GM12878 (cell line): ENCODE measurements at regions of chr6 and their contacts with region 1.

Region 1: DNA sequence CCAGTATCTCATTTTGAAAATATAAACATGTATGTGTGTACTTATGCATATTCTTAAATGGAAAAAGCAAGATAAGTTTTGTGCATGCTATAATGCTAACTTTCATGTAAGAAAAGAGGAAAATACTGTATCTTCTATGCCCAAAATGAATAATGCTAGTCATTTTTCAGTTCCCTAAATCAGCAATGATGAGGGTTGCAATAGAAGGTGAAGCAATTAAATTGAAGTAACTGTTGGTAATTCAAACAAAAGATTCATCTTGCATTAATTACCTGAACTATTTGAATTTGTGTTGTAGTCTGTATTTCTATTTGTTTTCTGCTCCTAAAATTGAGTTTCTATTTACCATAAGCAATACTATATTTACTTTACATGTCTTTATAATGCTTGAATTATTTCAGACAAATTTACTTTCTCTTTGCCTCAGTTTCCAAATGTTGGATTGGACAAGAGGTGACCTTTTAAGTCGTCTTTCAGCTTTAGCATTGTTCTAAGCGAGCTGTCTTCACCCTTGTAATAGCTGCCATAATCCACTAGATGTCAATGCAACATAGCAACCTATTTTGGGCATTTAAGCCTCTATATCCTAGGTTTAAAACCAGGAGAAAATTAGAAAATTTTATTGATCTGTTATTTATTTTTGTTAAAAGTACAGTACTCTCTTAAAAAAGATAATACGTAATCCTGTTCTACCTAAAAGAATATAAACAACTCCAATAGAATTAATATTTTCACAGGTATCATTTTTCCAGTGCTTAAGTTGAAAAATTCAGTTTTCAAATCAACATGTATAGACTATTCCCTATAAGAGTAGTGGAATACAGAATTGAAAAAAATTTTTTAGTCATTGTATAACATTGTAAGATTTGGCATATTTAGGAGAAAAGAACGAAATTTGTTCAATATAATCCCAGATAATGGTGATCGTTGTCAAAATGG is 52.3 kb upstream of the IFNGR1 start:
- DNase-seq: no peak
- ATAC-seq: peak; percentile 92
- H3K4me3 ChIP-seq: no peak overlapping the region
- H3K27ac ChIP-seq: no peak overlapping the region
- H3K4me1 ChIP-seq: peaks cover 3% of the 10 kb centered on the region
- H3K27me3 ChIP-seq: no peaks in the 10 kb centered on the region
- CTCF ChIP-seq: peak; percentile 80 to 91 (median 85)
- EP300 ChIP-seq: no peak
- POLR2A ChIP-seq: no peak
- RAD21 ChIP-seq: peak; percentile 100

Region 2: GRCh38 chr6:137171824-137172705 is 99.4 kb before region 1 on chr6:
- CTCF ChIA-PET with region 1: interaction called, 17 read pairs
- POLR2A ChIA-PET with region 1: interaction called, 4 read pairs
- RAD21 ChIA-PET with region 1: interaction called, 23 read pairs
- SMC1A ChIA-PET with region 1: interaction called, 28 read pairs
- in situ Hi-C with region 1: no loop called
- intact Hi-C with region 1: no loop called
- DNase-seq: peak; percentile 68
- ATAC-seq: peak; percentile 86
- H3K4me3 ChIP-seq: 0 out of 2 replicates have a peak overlapping the region, but pooled peaks have one; percentile 1
- H3K27ac ChIP-seq: peak overlapping the region; percentile 84
- H3K4me1 ChIP-seq: peaks cover 51% of the 10 kb centered on the region
- H3K27me3 ChIP-seq: no peaks in the 10 kb centered on the region
- CTCF ChIP-seq: no peak
- EP300 ChIP-seq: peak; percentile 51 to 64; a peak in 1 of 4 replicates
- POLR2A ChIP-seq: 0 out of 2 replicates have a peak, but pooled peaks have one; percentile 31
- RAD21 ChIP-seq: peak; percentile 18; the same call in 1 of the 2 replicates

Region 3: GRCh38 chr6:137233911-137234863 is 37.3 kb before region 1 on chr6:
- CTCF ChIA-PET with region 1: interaction called, 7 read pairs
- POLR2A ChIA-PET with region 1: no interaction called
- RAD21 ChIA-PET with region 1: interaction called, 9 read pairs
- SMC1A ChIA-PET with region 1: interaction called, 27 read pairs
- in situ Hi-C with region 1: no loop called
- intact Hi-C with region 1: no loop called
- DNase-seq: no peak
- ATAC-seq: peak; percentile 79
- H3K4me3 ChIP-seq: peak overlapping the region; percentile 28; the same call in 1 of the 2 replicates
- H3K27ac ChIP-seq: peak overlapping the region; percentile 76
- H3K4me1 ChIP-seq: peaks cover 52% of the 10 kb centered on the region
- H3K27me3 ChIP-seq: no peaks in the 10 kb centered on the region
- CTCF ChIP-seq: no peak
- EP300 ChIP-seq: peak in 1 of 2 experiments; percentile 60; a peak in 1 of 4 replicates
- POLR2A ChIP-seq: no peak
- RAD21 ChIP-seq: no peak

Region 4: GRCh38 chr6:137313928-137314855 is 42.7 kb after region 1 on chr6:
- CTCF ChIA-PET with region 1: interaction called, 70 read pairs
- POLR2A ChIA-PET with region 1: interaction called, 5 read pairs
- RAD21 ChIA-PET with region 1: interaction called, 61 read pairs
- SMC1A ChIA-PET with region 1: interaction called, 56 read pairs
- in situ Hi-C with region 1: no loop called
- intact Hi-C with region 1: loop called (anchors 1 kb)
- DNase-seq: peak; percentile 43
- ATAC-seq: peak; percentile 97
- H3K4me3 ChIP-seq: no peak overlapping the region
- H3K27ac ChIP-seq: no peak overlapping the region
- H3K4me1 ChIP-seq: peaks cover 10% of the 10 kb centered on the region
- H3K27me3 ChIP-seq: no peaks in the 10 kb centered on the region
- CTCF ChIP-seq: peak; percentile 66 to 90 (median 79)
- EP300 ChIP-seq: no peak
- POLR2A ChIP-seq: no peak
- RAD21 ChIP-seq: peak; percentile 99

Region 5: DNA sequence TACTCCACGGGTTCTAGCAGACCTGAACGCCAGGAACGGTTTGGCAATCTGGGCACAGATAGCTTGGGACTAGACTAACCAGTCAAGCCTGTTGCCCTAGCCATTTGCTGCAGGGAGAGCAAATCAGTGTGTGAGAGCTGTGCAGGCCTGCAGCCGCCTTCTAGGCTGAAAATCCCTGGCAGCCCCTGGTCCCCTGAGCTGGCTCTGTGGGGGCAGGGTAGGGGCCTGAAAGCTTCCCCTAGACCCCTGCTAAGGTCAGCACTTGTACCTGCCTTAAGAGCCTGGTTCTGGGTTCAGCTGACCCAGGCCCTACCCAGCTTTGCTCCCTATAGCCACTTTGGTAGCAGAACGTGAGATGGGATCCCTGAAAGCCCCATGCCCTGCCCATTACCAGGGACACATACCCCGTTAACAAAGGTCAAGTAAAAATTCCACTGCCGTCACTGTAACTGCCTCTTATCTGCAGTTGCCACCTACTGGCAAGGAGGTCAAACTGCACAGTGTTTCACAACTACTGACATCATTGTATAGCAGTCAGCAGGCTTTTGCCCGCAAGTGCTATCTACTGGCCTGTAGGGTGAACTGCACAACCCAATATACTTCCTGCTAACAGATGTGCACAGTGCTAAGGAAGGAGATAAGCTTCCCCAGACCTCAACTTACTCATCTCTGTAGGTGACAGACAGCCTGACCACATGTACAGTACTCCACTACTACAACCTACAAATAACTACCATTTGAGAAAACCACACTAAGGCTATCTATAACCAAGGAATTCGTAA is 317.7 kb after region 1 on chr6:
- CTCF ChIA-PET with region 1: interaction called, 4 read pairs
- POLR2A ChIA-PET with region 1: no interaction called
- RAD21 ChIA-PET with region 1: interaction called, 6 read pairs
- SMC1A ChIA-PET with region 1: interaction called, 5 read pairs
- in situ Hi-C with region 1: no loop called
- intact Hi-C with region 1: loop called (anchors 5 kb)
- DNase-seq: peak; percentile 74
- ATAC-seq: peak; percentile 100
- H3K4me3 ChIP-seq: 0 out of 2 replicates have a peak overlapping the region, but pooled peaks have one; percentile 19
- H3K27ac ChIP-seq: no peak overlapping the region
- H3K4me1 ChIP-seq: peaks cover 2% of the 10 kb centered on the region; the same call in 1 of the 2 replicates
- H3K27me3 ChIP-seq: no peaks in the 10 kb centered on the region
- CTCF ChIP-seq: peak; percentile 62 to 98 (median 81)
- EP300 ChIP-seq: no peak
- POLR2A ChIP-seq: no peak
- RAD21 ChIP-seq: peak; percentile 72